ENCODE measurements at regions of chr6 and their contacts with region 1.

Region 1: GRCh38 chr6:105077596-105078385 is 102.0 kb downstream of the POPDC3 start:
- DNase-seq: peak; percentile 40
- CTCF ChIP-seq: peak; percentile 38

Region 2: GRCh38 chr6:104789770-104790190 is 288.0 kb before region 1 on chr6:
- in situ Hi-C with region 1: loop called (anchors 10 kb)
- DNase-seq: peak; percentile 26
- CTCF ChIP-seq: peak; percentile 42